Ascending aorta (tissue), 2 donors: ENCODE measurements at regions of chr19 and their contacts with region 1.

Region 1: DNA sequence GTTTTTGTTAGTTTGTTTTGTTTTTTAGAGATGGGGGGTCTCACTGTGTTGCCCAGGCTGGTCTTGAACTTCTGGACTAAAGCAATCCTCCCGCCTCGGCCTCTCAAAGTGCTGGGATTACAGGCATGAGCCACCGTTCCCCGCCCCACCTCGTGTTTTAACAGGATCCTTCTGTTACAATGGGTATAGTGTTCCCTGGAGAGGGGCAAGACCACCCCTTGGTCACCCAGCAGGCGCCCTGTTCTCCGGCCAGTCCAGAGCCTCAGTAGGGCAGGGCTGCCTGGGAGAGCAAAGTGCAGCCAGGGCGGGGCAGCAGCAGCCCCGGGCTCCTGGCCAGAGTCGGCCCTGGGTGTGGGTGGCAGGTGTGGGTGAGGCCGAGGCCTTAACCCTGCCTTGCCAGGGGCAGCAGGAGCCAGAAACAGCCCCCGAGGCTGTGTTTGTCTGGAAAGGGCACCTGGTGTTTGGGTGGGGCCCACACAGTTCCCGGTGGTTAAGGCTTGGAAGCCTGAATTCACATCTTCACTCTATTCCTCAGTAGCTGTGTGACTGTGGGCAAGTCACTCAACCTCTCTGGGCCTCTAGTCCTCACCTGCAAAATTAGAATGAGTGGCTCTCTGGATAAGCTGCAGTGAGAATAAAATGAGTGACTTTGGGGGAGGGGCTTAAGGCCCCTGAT is 7.2 kb downstream of the VASP start:
- DNase-seq: no peak
- H3K4me3 ChIP-seq: no peak overlapping the region
- H3K27ac ChIP-seq: peak overlapping the region; percentile 30 to 52
- H3K4me1 ChIP-seq: peaks cover 0 to 22% of the 10 kb centered on the region in 2 donors
- H3K27me3 ChIP-seq: no peaks in the 10 kb centered on the region
- CTCF ChIP-seq: no peak

Region 2: GRCh38 chr19:45234089-45234869 is 280.2 kb before region 1 on chr19:
- intact Hi-C with region 1: no loop called
- DNase-seq: no peak
- H3K4me3 ChIP-seq: no peak overlapping the region
- H3K27ac ChIP-seq: no peak overlapping the region
- H3K4me1 ChIP-seq: no peaks in the 10 kb centered on the region
- H3K27me3 ChIP-seq: peaks cover 3% of the 10 kb centered on the region
- CTCF ChIP-seq: no peak

Region 3: GRCh38 chr19:45370410-45371204 is 143.9 kb before region 1 on chr19 and contains the start of gene ERCC2:
- intact Hi-C with region 1: no loop called
- DNase-seq: peak; percentile 96 to 99
- H3K4me3 ChIP-seq: peak within 1 kb of the TSS; percentile 80 to 84
- H3K27ac ChIP-seq: peak within 1 kb of the TSS; percentile 65 to 69
- H3K4me1 ChIP-seq: peaks cover 0 to 8% of the 10 kb centered on the region in 2 donors
- H3K27me3 ChIP-seq: no peaks in the 10 kb centered on the region
- CTCF ChIP-seq: no peak
- total RNA-seq, gene ERCC2: 22.4 TPM

Region 4: GRCh38 chr19:45499196-45500180 is 15.0 kb before region 1 on chr19:
- intact Hi-C with region 1: loop called (anchors 1 kb)
- DNase-seq: no peak
- H3K4me3 ChIP-seq: peak overlapping the region; percentile 37 to 39
- H3K27ac ChIP-seq: no peak overlapping the region
- H3K4me1 ChIP-seq: peaks cover 8 to 17% of the 10 kb centered on the region in 2 donors
- H3K27me3 ChIP-seq: peaks cover 18% of the 10 kb centered on the region
- CTCF ChIP-seq: no peak